Astrocyte of the cerebellum (primary cell): ENCODE measurements at regions of chr10 and their contacts with region 1.

Region 1: GRCh38 chr10:95976362-95977229 is 66.8 kb upstream of the CCNJ start:
- DNase-seq: no peak
- H3K4me3 ChIP-seq: no peak overlapping the region
- CTCF ChIP-seq: no peak

Region 2: GRCh38 chr10:95889830-95890229 is 86.8 kb before region 1 on chr10:
- in situ Hi-C with region 1: no loop called
- DNase-seq: no peak
- H3K4me3 ChIP-seq: no peak overlapping the region
- CTCF ChIP-seq: no peak

Region 3: GRCh38 chr10:95935429-95935828 is 41.2 kb before region 1 on chr10:
- in situ Hi-C with region 1: loop called (anchors 5 kb)
- DNase-seq: no peak
- H3K4me3 ChIP-seq: no peak overlapping the region
- CTCF ChIP-seq: no peak